ENCODE measurements at regions of chr4 and their contacts with region 1.

Region 1: GRCh38 chr4:184825896-184826690 is at the start of gene ACSL1:
- DNase-seq: peak; percentile 82 to 90
- H3K4me3 ChIP-seq: peak within 1 kb of the TSS; percentile 73 to 86 (median 78)
- H3K27ac ChIP-seq: peak within 1 kb of the TSS; percentile 80 to 95 (median 91)
- H3K4me1 ChIP-seq: peaks cover 10 to 44% (median 25%) of the 10 kb centered on the region in 4 donors
- H3K27me3 ChIP-seq: no peaks in the 10 kb centered on the region
- CTCF ChIP-seq: no peak
- EP300 ChIP-seq: no peak
- POLR2A ChIP-seq: no peak
- total RNA-seq, gene ACSL1: 47.1 to 1,170 (median 61.8) TPM

Region 2: DNA sequence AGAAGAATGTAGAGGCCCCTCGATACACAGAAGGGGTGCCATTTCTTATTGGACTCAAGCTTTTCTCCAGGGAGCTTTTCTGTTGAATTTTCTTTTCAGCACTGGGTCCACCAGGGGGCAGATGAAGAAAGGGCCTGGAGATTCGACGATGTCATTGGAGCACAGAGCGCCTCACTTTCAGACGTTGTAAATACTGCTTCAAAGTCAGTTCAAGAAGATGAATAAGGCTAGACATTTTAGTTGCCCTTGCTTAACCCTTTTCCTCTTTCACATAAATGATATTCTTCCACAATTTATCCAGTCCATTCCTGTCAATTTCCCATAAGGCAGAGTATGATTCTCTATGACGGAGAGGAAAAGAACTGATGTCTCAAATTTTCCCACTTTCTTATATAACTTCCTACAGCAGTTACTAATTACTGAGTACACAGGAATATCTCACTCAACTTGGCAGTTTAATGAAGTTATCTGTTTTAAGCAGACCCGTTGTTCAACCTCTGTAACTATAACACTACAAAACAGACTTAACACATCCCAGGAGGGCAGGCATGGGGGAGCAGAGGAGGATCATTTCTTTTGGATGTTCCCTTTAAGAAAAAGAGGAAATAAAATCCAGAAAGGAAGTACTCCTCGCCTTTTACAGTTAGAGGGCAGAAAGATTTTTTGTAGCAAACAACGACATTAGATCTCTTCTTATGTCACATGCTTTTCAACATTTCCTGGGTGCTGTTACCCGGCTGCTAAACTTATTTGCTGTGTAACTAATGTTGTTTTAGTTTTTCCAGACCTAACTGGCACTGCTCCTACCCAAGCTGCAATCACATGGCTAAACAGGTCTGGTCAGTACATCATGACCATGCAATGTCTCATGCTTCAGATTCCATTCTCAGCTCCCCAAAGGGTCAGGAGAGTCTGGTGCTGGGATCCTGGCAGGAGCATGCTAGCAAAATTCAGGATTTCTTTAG is 80.0 kb before region 1 on chr4:
- intact Hi-C with region 1: loop called (anchors 10 kb)
- DNase-seq: peak; percentile 80 to 91
- H3K4me3 ChIP-seq: peak overlapping the region in 3 of 4 donors; percentile 5 to 13 (median 9)
- H3K27ac ChIP-seq: peak overlapping the region; percentile 69 to 91 (median 81)
- H3K4me1 ChIP-seq: peaks cover 36 to 46% (median 39%) of the 10 kb centered on the region in 4 donors
- H3K27me3 ChIP-seq: no peaks in the 10 kb centered on the region
- CTCF ChIP-seq: peak in 5 of 7 experiments; percentile 68 to 86 (median 70)
- EP300 ChIP-seq: no peak
- POLR2A ChIP-seq: no peak

Region 3: DNA sequence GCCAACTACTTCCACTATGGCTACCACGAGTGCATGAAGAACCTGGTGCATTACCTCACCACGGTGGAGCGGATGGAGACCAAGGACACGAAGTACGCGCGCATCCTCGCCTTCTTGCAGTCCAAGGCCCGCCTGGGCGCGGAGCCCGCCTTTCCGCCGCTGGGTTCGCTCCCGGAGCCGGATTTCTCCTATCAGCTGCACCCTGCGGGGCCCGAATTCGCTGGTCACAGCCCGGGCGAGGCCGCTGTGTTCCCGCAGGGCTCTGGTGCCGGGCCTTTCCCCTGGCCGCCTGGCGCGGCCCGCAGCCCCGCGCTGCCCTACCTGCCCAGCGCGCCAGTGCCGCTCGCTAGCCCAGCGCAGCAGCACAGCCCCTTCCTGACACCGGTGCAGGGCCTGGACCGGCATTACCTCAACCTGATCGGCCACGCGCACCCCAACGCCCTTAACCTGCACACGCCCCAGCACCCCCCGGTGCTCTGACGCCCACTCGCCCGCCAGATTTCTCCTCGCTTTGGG is 194.3 kb after region 1 on chr4:
- intact Hi-C with region 1: no loop called
- DNase-seq: peak in 1 of 2 donors; percentile 48
- H3K4me3 ChIP-seq: peak overlapping the region in 3 of 4 donors; percentile 11 to 39 (median 25)
- H3K27ac ChIP-seq: no peak overlapping the region
- H3K4me1 ChIP-seq: peaks cover 5 to 61% (median 41%) of the 10 kb centered on the region in 4 donors
- H3K27me3 ChIP-seq: peaks cover 38 to 100% (median 69%) of the 10 kb centered on the region in 3 donors
- CTCF ChIP-seq: no peak
- EP300 ChIP-seq: no peak
- POLR2A ChIP-seq: no peak

Measured in stomach (tissue), 19 donors.